Calu3 (cell line): ENCODE measurements at regions of chr3 and their contacts with region 1.

Region 1: GRCh38 chr3:141971571-141971970 is 95.1 kb downstream of the ATP1B3 start:
- DNase-seq: no peak
- H3K4me3 Mint-ChIP-seq: no peak overlapping the region
- H3K27ac Mint-ChIP-seq: no peak overlapping the region
- H3K4me1 Mint-ChIP-seq: peaks cover 10% of the 10 kb centered on the region
- H3K27me3 Mint-ChIP-seq: no peaks in the 10 kb centered on the region
- CTCF ChIP-seq: no peak

Region 2: GRCh38 chr3:141642212-141642611 is 329.4 kb before region 1 on chr3:
- CTCF ChIA-PET with region 1: no interaction called
- intact Hi-C with region 1: no loop called
- DNase-seq: no peak
- H3K4me3 Mint-ChIP-seq: no peak overlapping the region
- H3K27ac Mint-ChIP-seq: no peak overlapping the region
- H3K4me1 Mint-ChIP-seq: no peaks in the 10 kb centered on the region
- H3K27me3 Mint-ChIP-seq: no peaks in the 10 kb centered on the region
- CTCF ChIP-seq: no peak

Region 3: GRCh38 chr3:141828487-141829268 is 142.9 kb before region 1 on chr3:
- CTCF ChIA-PET with region 1: no interaction called
- intact Hi-C with region 1: no loop called
- DNase-seq: peak; percentile 54
- H3K4me3 Mint-ChIP-seq: no peak overlapping the region
- H3K27ac Mint-ChIP-seq: no peak overlapping the region
- H3K4me1 Mint-ChIP-seq: no peaks in the 10 kb centered on the region
- H3K27me3 Mint-ChIP-seq: no peaks in the 10 kb centered on the region
- CTCF ChIP-seq: no peak

Region 4: DNA sequence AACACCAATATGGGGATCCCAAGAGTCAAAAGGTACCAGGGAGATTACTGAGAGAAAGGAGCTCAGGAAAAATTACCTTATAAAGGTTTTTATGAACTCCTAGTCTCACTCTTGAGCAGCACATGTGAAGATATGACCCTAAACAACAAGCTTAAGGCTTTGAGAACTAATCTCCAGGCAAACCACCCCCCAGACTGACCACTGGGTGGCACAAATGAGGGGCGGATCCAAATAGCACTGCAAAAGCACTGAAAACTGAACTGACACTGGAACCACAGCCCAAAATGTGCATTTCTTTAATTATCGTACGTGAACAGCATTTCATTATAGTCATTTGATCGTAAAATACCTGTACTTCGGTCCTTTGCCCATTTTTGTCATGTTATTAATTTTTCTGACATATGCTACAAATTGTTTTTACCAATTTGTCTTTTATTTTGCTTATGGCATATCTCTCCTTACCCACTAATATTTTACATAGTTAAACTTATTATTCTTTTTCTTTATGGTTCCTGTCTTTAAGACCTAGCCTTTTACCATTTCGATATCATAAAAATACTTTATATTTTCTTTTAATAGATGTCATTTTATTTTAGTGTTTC is 209.3 kb after region 1 on chr3:
- CTCF ChIA-PET with region 1: no interaction called
- intact Hi-C with region 1: no loop called
- DNase-seq: peak; percentile 75
- H3K4me3 Mint-ChIP-seq: no peak overlapping the region
- H3K27ac Mint-ChIP-seq: no peak overlapping the region
- H3K4me1 Mint-ChIP-seq: no peaks in the 10 kb centered on the region
- H3K27me3 Mint-ChIP-seq: no peaks in the 10 kb centered on the region
- CTCF ChIP-seq: peak; percentile 77

Region 5: DNA sequence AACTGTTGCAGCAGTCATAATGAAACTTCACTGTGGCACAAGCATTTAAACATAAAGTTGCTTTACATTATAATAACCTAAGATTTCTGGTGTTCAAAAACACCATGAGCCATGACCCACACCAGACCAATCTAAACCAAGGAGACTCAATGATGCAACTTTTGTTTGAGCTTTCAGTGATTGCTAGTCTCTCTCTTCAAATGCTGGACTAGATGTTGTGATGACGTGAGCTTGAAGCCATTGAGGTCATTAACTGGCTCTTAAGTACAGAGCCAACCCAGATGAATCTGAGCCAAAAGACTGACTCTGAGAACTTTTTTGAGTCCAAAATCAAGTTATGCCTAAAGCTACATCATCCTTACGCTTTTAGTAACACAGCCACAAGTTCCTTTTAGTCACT is 570.5 kb after region 1 on chr3:
- CTCF ChIA-PET with region 1: interaction called, 13 read pairs
- intact Hi-C with region 1: no loop called
- DNase-seq: no peak
- H3K4me3 Mint-ChIP-seq: no peak overlapping the region
- H3K27ac Mint-ChIP-seq: no peak overlapping the region
- H3K4me1 Mint-ChIP-seq: no peaks in the 10 kb centered on the region
- H3K27me3 Mint-ChIP-seq: no peaks in the 10 kb centered on the region
- CTCF ChIP-seq: no peak